Activated CD8-positive, alpha-beta T cell treated with anti-CD3 and anti-CD28 coated beads for 36 hours (primary cell): ENCODE measurements at regions of chr12 and their contacts with region 1.

Region 1: GRCh38 chr12:123449249-123449733 is 8.6 kb upstream of the SNRNP35 start:
- DNase-seq: no peak
- ATAC-seq: no peak
- H3K4me3 Mint-ChIP-seq: peak overlapping the region; percentile 24
- H3K27ac Mint-ChIP-seq: peak overlapping the region; percentile 87
- H3K4me1 Mint-ChIP-seq: peaks cover 16% of the 10 kb centered on the region
- H3K27me3 Mint-ChIP-seq: no peaks in the 10 kb centered on the region
- CTCF ChIP-seq: no peak

Region 2: DNA sequence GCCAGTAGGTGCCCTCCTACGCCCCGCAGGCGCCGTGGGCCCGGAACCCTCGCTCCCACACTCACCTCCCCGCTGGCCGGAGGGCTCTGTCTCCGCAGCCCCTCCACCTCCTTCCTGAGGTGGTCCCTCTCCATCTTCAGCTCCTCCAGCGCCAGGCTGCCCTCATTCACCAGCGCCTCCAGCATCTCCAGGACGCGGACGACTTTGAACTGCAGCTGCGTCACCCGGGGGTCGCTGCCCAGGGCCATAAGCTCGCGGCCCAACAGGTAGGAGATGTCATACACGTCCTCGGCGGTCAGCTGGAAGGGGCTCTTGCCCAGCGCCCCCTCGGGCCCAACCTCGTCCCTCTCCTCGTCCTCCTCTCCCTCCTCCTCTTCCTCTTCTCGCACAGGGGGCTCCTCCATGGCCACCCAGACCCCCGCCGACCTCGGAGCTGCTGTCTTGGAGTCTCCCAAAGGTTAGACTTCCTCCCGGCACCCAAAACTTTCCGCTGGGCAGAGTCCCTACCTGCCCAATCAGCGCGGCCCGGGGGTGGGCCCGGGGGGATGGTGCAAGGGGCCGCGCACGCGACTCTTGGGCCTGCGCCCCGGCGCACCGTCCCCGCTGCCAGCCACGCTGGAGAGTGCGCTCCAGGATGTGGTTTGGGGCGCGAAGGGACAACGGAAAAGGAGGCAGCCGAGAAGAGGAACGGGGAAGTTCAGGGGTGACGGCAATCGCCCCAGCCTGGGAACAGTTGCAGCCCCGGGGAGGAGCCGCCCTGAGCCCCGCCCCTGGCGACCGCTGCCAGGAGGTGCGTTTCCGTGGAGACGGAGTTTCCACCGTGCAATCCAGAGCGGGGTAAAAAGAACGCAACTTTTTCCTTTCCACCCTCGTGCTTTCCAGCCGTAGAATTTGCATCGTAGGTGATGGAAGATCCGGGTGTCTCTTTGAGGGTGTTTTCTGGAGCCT is 13.0 kb before region 1 on chr12 and contains the start of gene RILPL2:
- CTCF ChIA-PET with region 1: interaction called, 5 read pairs
- POLR2A ChIA-PET with region 1: interaction called, 11 read pairs
- intact Hi-C with region 1: no loop called
- DNase-seq: peak; percentile 95
- ATAC-seq: peak; percentile 87
- H3K4me3 Mint-ChIP-seq: peak within 1 kb of the TSS; percentile 96
- H3K27ac Mint-ChIP-seq: peak within 1 kb of the TSS; percentile 97
- H3K4me1 Mint-ChIP-seq: peaks cover 32% of the 10 kb centered on the region
- H3K27me3 Mint-ChIP-seq: no peaks in the 10 kb centered on the region
- CTCF ChIP-seq: no peak
- total RNA-seq, gene RILPL2: 9.0 to 9.3 TPM